ENCODE measurements at regions of chr2 and their contacts with region 1.

Region 1: DNA sequence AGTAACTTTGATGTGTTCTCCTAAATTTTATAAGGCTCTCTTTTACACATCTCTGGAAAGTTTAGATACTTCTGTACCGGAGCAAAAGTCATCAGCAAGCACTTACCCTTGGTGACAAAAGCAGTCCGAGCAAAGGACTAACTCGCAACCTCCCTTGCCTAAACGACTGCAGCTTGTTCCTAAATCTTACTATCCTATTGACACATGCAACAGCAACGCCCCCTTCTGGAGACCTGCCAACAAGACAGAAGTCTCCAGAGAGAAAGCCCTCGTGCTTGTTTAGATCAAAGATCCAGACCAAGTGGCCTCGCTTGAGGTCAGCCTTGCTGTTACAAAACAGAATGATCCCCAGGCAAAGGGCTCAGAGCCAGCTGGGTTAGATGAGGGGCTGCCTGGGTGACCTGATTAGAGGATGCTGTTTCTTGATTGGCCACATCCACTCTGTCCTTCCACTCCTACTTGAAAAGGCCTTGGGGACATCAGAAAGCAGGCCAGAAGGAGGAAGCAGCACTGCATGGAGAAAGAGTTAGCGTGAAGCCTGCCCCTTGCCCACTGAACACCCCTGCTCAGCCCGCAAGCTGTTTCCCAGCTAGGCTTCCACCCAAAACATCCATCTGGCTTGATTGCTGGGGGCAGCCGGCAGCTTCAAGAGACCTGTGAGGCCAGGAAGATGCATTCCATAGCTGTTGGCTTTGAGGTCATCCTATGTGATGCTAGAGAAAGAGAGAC is 94.3 kb downstream of the HNRNPLL start:
- DNase-seq: peak; percentile 93
- H3K4me3 Mint-ChIP-seq: no peak overlapping the region
- H3K27ac Mint-ChIP-seq: no peak overlapping the region
- H3K4me1 Mint-ChIP-seq: no peaks in the 10 kb centered on the region
- H3K27me3 Mint-ChIP-seq: no peaks in the 10 kb centered on the region

Region 2: DNA sequence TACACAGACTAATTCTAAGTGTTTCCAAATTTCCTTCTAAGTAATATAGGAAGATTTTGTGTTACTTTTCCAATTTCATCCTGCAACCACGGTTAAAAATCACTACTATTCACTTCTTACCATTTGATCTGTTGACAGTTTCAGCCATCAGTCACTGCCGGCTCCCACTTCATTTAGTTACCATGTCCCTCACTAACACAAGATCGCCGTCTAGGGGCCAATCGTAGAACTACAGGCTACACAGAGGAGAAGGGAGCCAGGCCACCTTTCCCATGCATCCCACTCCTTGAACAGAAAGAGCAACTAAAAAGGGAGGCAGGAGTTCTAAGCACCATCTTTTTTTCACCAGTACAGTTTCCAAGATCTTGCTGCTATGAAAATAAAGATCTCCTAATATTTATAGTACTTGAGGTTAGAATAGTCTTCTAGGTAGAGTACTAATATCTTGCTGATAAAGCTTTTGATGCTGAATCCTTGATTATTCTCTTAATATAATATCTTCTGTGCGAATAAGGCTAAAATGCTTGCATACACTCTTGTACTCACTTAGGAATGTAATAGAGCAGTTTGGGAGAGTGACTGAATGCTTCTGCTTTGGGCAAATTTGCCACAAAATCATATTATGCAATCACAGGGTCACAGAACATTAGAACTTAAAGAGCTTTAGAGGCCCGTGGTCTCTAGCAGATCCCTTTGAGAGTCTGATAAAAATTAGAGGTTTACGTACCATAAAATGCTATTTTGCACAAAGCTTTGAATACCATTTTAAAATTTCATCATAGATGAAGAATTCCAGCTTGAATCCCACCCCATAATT is 393.1 kb before region 1 on chr2:
- CTCF ChIA-PET with region 1: no interaction called
- intact Hi-C with region 1: loop called (anchors 1 kb)
- DNase-seq: peak; percentile 92
- H3K4me3 Mint-ChIP-seq: no peak overlapping the region
- H3K27ac Mint-ChIP-seq: no peak overlapping the region
- H3K4me1 Mint-ChIP-seq: no peaks in the 10 kb centered on the region
- H3K27me3 Mint-ChIP-seq: peaks cover 13% of the 10 kb centered on the region

Region 3: DNA sequence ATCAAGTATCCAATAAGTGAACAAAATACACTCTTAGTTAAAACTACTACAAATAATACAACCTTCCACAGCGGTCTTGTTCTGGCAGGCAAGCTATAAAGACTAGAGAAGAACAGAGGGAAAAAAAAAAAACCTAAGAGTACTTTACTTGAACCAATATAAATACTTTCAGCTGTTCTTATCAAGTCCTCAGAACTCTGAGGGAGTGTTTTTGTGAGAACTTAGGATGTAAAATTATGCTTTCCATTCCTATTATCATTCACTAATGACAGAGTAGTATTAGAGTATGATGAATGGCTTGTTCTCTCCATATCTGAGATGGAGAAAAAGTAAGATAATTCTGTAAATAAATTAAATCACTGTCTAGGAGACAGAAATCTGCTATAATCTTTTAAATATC is 199.7 kb before region 1 on chr2:
- CTCF ChIA-PET with region 1: interaction called, 10 read pairs
- intact Hi-C with region 1: no loop called
- DNase-seq: no peak
- H3K4me3 Mint-ChIP-seq: no peak overlapping the region
- H3K27ac Mint-ChIP-seq: no peak overlapping the region
- H3K4me1 Mint-ChIP-seq: peaks cover 8% of the 10 kb centered on the region
- H3K27me3 Mint-ChIP-seq: no peaks in the 10 kb centered on the region

Region 4: GRCh38 chr2:38474715-38475566 is 33.5 kb before region 1 on chr2:
- CTCF ChIA-PET with region 1: interaction called, 10 read pairs
- intact Hi-C with region 1: no loop called
- DNase-seq: peak; percentile 50
- H3K4me3 Mint-ChIP-seq: no peak overlapping the region
- H3K27ac Mint-ChIP-seq: no peak overlapping the region
- H3K4me1 Mint-ChIP-seq: peaks cover 26% of the 10 kb centered on the region
- H3K27me3 Mint-ChIP-seq: peaks cover 11% of the 10 kb centered on the region

Measured in activated naive CD4-positive, alpha-beta T cell treated with anti-CD3 and anti-CD28 coated beads for 36 hours (primary cell).